Naive thymus-derived CD4-positive, alpha-beta T cell (primary cell): ENCODE measurements at regions of chr6 and their contacts with region 1.

Region 1: DNA sequence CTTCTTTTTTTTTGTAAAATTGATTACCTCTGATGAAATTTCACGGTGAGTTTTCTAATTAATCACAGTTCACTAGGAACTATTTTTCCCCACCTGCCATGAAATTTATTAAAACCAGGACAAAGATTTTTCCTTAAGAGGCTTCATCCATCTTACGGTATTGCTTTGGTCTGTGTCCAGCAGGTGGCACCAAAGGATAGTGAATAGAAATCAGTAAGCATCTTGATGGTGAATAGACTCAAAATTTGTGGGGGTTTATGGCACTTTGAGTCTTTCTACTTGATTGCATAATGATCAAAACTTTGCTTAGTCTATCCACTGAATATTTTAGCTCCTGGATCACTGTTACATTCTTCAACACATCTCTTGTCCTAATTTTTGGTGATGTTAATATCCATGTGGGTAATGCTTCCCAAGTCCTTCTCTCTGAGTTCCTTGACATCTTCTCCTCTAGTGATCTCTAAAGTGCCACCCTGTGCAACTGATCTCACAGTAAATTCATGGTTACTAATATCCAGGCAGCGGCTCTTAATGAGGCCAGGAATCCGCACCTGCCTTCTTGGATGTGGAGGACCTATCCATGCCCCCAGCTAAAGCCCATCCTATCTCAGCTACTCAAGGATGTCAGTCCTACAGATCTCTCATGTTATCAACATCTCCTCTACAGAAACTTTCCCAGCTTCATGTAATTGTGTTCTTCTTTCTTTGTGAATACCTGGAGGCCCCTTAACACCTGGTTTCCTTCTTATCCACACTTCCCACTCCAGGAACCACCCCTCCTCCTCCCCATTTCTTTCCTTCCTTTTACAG is 54.5 kb downstream of the STMND1 start:
- DNase-seq: peak; percentile 14 to 64 (median 50)
- ATAC-seq: peak; percentile 59
- H3K4me3 ChIP-seq: no peak overlapping the region
- H3K4me3 Mint-ChIP-seq: no peak overlapping the region
- H3K27ac ChIP-seq: no peak overlapping the region
- H3K27ac Mint-ChIP-seq: no peak overlapping the region
- H3K4me1 ChIP-seq: no peaks in the 10 kb centered on the region
- H3K4me1 Mint-ChIP-seq: no peaks in the 10 kb centered on the region
- H3K27me3 ChIP-seq: no peaks in the 10 kb centered on the region
- H3K27me3 Mint-ChIP-seq: peaks cover 10 to 20% (median 12%) of the 10 kb centered on the region in 5 donors

Region 2: GRCh38 chr6:17808609-17809008 is 652.3 kb after region 1 on chr6:
- CTCF ChIA-PET with region 1: interaction called, 6 read pairs
- POLR2A ChIA-PET with region 1: no interaction called
- intact Hi-C with region 1: loop called in 1 of 2 experiments (anchors 1 kb)
- DNase-seq: no peak
- ATAC-seq: no peak
- H3K4me3 ChIP-seq: no peak overlapping the region
- H3K4me3 Mint-ChIP-seq: no peak overlapping the region
- H3K27ac ChIP-seq: no peak overlapping the region
- H3K27ac Mint-ChIP-seq: no peak overlapping the region
- H3K4me1 ChIP-seq: no peaks in the 10 kb centered on the region
- H3K4me1 Mint-ChIP-seq: peaks cover 0 to 4% (median 0%) of the 10 kb centered on the region in 7 donors
- H3K27me3 ChIP-seq: no peaks in the 10 kb centered on the region
- H3K27me3 Mint-ChIP-seq: peaks cover 0 to 24% (median 12%) of the 10 kb centered on the region in 5 donors

Region 3: GRCh38 chr6:17820055-17820454 is 663.7 kb after region 1 on chr6:
- CTCF ChIA-PET with region 1: interaction called, 3 read pairs
- POLR2A ChIA-PET with region 1: no interaction called
- intact Hi-C with region 1: loop called in 1 of 2 experiments (anchors 1 kb)
- DNase-seq: no peak
- ATAC-seq: no peak
- H3K4me3 ChIP-seq: no peak overlapping the region
- H3K4me3 Mint-ChIP-seq: no peak overlapping the region
- H3K27ac ChIP-seq: no peak overlapping the region
- H3K27ac Mint-ChIP-seq: no peak overlapping the region
- H3K4me1 ChIP-seq: no peaks in the 10 kb centered on the region
- H3K4me1 Mint-ChIP-seq: peaks cover 0 to 2% (median 0%) of the 10 kb centered on the region in 7 donors
- H3K27me3 ChIP-seq: no peaks in the 10 kb centered on the region
- H3K27me3 Mint-ChIP-seq: peaks cover 0 to 12% (median 4%) of the 10 kb centered on the region in 5 donors

Region 4: GRCh38 chr6:18122124-18123093 is 966.1 kb after region 1 on chr6 and contains the start of gene NHLRC1:
- CTCF ChIA-PET with region 1: no interaction called
- POLR2A ChIA-PET with region 1: no interaction called
- intact Hi-C with region 1: loop called in 1 of 2 experiments (anchors 10 kb)
- DNase-seq: peak; percentile 43 to 68 (median 65)
- ATAC-seq: peak; percentile 100
- H3K4me3 ChIP-seq: peak within 1 kb of the TSS; percentile 63
- H3K4me3 Mint-ChIP-seq: peak within 1 kb of the TSS; percentile 81 to 90 (median 87)
- H3K27ac ChIP-seq: no peak within 1 kb of the TSS
- H3K27ac Mint-ChIP-seq: peak within 1 kb of the TSS; percentile 6 to 87 (median 53)
- H3K4me1 ChIP-seq: peaks cover 5 to 8% of the 10 kb centered on the region in 2 donors
- H3K4me1 Mint-ChIP-seq: peaks cover 0 to 15% (median 8%) of the 10 kb centered on the region in 7 donors
- H3K27me3 ChIP-seq: no peaks in the 10 kb centered on the region
- H3K27me3 Mint-ChIP-seq: peaks cover 0 to 65% (median 7%) of the 10 kb centered on the region in 5 donors
- total RNA-seq, gene NHLRC1: 0.39 to 1.4 (median 0.61) TPM

Region 5: DNA sequence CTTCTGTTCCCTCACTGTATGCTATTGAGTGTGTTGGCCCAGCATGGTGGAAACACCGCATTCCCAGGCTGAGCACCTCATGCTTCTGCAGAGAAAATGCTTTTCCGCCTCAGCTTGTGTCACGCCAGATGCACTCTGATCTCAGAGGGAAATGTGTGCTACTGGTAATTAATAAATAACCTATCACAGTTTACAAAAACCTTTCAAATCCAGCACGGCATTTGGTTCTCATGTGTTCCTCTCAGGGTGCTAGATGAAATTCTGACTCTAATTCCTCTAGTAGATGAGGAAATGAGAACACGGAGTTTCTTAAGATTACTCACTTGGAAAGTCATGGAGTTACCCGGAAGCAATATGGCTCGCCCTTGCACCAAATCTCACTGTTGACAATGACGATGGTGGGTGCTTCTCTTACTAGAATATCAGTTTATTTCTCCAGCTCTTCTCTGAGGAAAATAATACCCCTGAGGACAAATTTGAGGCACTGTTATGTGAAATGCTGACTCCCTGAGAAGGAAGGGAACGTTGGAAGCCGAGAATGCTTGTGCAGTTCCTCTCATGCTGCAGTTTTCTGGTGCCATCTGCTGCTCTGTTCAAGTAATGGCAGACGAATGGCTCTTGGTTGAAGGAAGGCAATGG is 1347.4 kb after region 1 on chr6:
- CTCF ChIA-PET with region 1: no interaction called
- POLR2A ChIA-PET with region 1: no interaction called
- intact Hi-C with region 1: loop called in 1 of 2 experiments (anchors 1 kb)
- DNase-seq: peak in 6 of 9 donors; percentile 19 to 54 (median 38)
- ATAC-seq: peak; percentile 63
- H3K4me3 ChIP-seq: no peak overlapping the region
- H3K4me3 Mint-ChIP-seq: peak overlapping the region in 2 of 10 donors; percentile 29 to 50
- H3K27ac ChIP-seq: no peak overlapping the region
- H3K27ac Mint-ChIP-seq: no peak overlapping the region
- H3K4me1 ChIP-seq: no peaks in the 10 kb centered on the region
- H3K4me1 Mint-ChIP-seq: peaks cover 0 to 4% (median 0%) of the 10 kb centered on the region in 7 donors
- H3K27me3 ChIP-seq: no peaks in the 10 kb centered on the region
- H3K27me3 Mint-ChIP-seq: peaks cover 0 to 7% (median 4%) of the 10 kb centered on the region in 5 donors